ENCODE measurements at regions of chr2 and their contacts with region 1.

Region 1: DNA sequence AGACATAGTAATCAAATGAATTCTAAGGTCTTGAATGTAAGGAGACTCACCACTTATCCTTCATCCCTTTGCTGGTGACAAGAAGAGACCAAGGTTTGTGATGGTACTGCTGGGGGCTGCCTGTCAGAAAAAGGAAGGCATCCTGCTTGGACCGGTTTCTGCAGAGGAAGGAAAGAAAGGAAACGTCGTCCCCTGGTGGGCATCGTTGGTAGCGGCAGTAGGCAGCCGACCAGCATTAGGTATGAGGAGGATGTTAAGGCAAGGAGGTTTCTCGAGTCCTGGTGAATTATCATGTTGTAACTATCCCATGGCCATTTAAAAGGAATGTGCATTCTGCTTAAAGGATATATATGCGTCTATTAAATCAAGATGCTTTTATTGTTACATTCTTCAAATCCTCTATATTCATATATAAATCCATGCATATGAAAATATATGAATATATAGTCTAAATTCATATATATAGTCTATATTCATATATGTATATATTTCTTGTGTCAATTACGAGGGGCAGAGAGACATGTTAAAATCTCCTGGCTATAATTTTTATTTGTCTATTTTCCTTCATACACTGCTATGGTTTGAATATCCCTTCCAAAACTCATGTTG is 94.4 kb upstream of the TGFA start:
- DNase-seq: peak; percentile 54 to 68 (median 63)
- H3K4me3 ChIP-seq: no peak overlapping the region
- H3K4me3 Mint-ChIP-seq: no peak overlapping the region
- H3K27ac ChIP-seq: no peak overlapping the region
- H3K27ac Mint-ChIP-seq: no peak overlapping the region
- H3K4me1 ChIP-seq: no peaks in the 10 kb centered on the region
- H3K4me1 Mint-ChIP-seq: no peaks in the 10 kb centered on the region
- H3K27me3 ChIP-seq: no peaks in the 10 kb centered on the region
- H3K27me3 Mint-ChIP-seq: peaks cover 0 to 4% of the 10 kb centered on the region in 2 donors

Region 2: GRCh38 chr2:70340921-70341765 is 306.8 kb before region 1 on chr2:
- CTCF ChIA-PET with region 1: interaction called, 32 read pairs
- POLR2A ChIA-PET with region 1: no interaction called
- intact Hi-C with region 1: loop called (anchors 1 kb)
- DNase-seq: peak; percentile 41 to 50 (median 47)
- H3K4me3 ChIP-seq: no peak overlapping the region
- H3K4me3 Mint-ChIP-seq: peak overlapping the region in 1 of 8 donors; percentile 0
- H3K27ac ChIP-seq: no peak overlapping the region
- H3K27ac Mint-ChIP-seq: no peak overlapping the region
- H3K4me1 ChIP-seq: no peaks in the 10 kb centered on the region
- H3K4me1 Mint-ChIP-seq: peaks cover 0 to 2% (median under 1%) of the 10 kb centered on the region in 4 donors
- H3K27me3 ChIP-seq: no peaks in the 10 kb centered on the region
- H3K27me3 Mint-ChIP-seq: peaks cover 5 to 12% of the 10 kb centered on the region in 2 donors

Region 3: DNA sequence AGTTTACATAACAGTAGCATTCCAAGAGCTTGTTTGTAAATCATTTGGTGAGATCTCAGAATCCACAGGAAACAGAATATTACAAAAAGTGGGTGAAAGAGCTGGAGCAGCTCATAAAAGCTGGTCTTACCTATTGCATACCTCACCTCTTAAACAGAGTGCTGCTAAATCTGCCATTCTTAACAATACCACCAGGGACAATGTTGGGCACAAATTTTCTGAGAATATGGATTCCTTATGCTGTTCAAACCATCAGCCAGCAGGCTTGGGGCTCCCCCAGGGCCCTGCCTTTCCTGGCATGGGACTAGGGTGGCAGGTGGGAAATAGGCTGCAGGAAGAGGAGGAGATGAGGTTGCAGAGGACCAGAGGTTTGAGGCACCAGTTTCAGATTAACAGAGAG is 149.9 kb before region 1 on chr2:
- CTCF ChIA-PET with region 1: no interaction called
- POLR2A ChIA-PET with region 1: no interaction called
- intact Hi-C with region 1: loop called (anchors 10 kb)
- DNase-seq: no peak
- H3K4me3 ChIP-seq: no peak overlapping the region
- H3K4me3 Mint-ChIP-seq: no peak overlapping the region
- H3K27ac ChIP-seq: no peak overlapping the region
- H3K27ac Mint-ChIP-seq: no peak overlapping the region
- H3K4me1 ChIP-seq: no peaks in the 10 kb centered on the region
- H3K4me1 Mint-ChIP-seq: peaks cover 0 to 3% (median 0%) of the 10 kb centered on the region in 4 donors
- H3K27me3 ChIP-seq: no peaks in the 10 kb centered on the region
- H3K27me3 Mint-ChIP-seq: peaks cover 10% of the 10 kb centered on the region in 2 donors

Region 4: GRCh38 chr2:70553584-70554337 is 94.2 kb before region 1 on chr2 and contains the start of gene TGFA:
- CTCF ChIA-PET with region 1: interaction called, 3 read pairs
- POLR2A ChIA-PET with region 1: no interaction called
- intact Hi-C with region 1: loop called (anchors 1 kb)
- DNase-seq: peak; percentile 63 to 73 (median 65)
- H3K4me3 ChIP-seq: peak within 1 kb of the TSS; percentile 47 to 62
- H3K4me3 Mint-ChIP-seq: peak within 1 kb of the TSS; percentile 87 to 96 (median 91)
- H3K27ac ChIP-seq: peak within 1 kb of the TSS; percentile 45
- H3K27ac Mint-ChIP-seq: peak within 1 kb of the TSS; percentile 80 to 94 (median 88)
- H3K4me1 ChIP-seq: peaks cover 26% of the 10 kb centered on the region
- H3K4me1 Mint-ChIP-seq: peaks cover 14 to 40% (median 26%) of the 10 kb centered on the region in 4 donors
- H3K27me3 ChIP-seq: peaks cover 5% of the 10 kb centered on the region
- H3K27me3 Mint-ChIP-seq: peaks cover 3 to 19% of the 10 kb centered on the region in 2 donors
- total RNA-seq, gene TGFA: 2.9 to 4.2 TPM

Region 5: GRCh38 chr2:70633508-70633907 is 14.5 kb before region 1 on chr2:
- CTCF ChIA-PET with region 1: interaction called, 26 read pairs
- POLR2A ChIA-PET with region 1: no interaction called
- intact Hi-C with region 1: no loop called
- DNase-seq: no peak
- H3K4me3 ChIP-seq: no peak overlapping the region
- H3K4me3 Mint-ChIP-seq: no peak overlapping the region
- H3K27ac ChIP-seq: no peak overlapping the region
- H3K27ac Mint-ChIP-seq: no peak overlapping the region
- H3K4me1 ChIP-seq: peaks cover 4% of the 10 kb centered on the region
- H3K4me1 Mint-ChIP-seq: peaks cover 5 to 7% (median 5%) of the 10 kb centered on the region in 4 donors
- H3K27me3 ChIP-seq: no peaks in the 10 kb centered on the region
- H3K27me3 Mint-ChIP-seq: peaks cover 0 to 4% of the 10 kb centered on the region in 2 donors

Region 6: GRCh38 chr2:71068218-71069035 is 420.4 kb after region 1 on chr2 and contains the start of gene NAGK:
- CTCF ChIA-PET with region 1: no interaction called
- POLR2A ChIA-PET with region 1: no interaction called
- intact Hi-C with region 1: no loop called
- DNase-seq: peak; percentile 98 to 100 (median 99)
- H3K4me3 ChIP-seq: peak within 1 kb of the TSS; percentile 90 to 96
- H3K4me3 Mint-ChIP-seq: peak within 1 kb of the TSS; percentile 95 to 98 (median 97)
- H3K27ac ChIP-seq: peak within 1 kb of the TSS; percentile 94
- H3K27ac Mint-ChIP-seq: peak within 1 kb of the TSS; percentile 97 to 100 (median 99)
- H3K4me1 ChIP-seq: peaks cover 58% of the 10 kb centered on the region
- H3K4me1 Mint-ChIP-seq: peaks cover 42 to 69% (median 53%) of the 10 kb centered on the region in 4 donors
- H3K27me3 ChIP-seq: no peaks in the 10 kb centered on the region
- H3K27me3 Mint-ChIP-seq: no peaks in the 10 kb centered on the region
- total RNA-seq, gene NAGK: 161 to 167 TPM

Measured in CD4-positive, alpha-beta memory T cell (primary cell).